HAP-1 (cell line): ENCODE measurements at regions of chr16 and their contacts with region 1.

Region 1: GRCh38 chr16:75794426-75794825 is 68.1 kb upstream of the CPHXL start:
- DNase-seq: no peak
- H3K4me3 ChIP-seq: no peak overlapping the region
- H3K4me1 ChIP-seq: no peaks in the 10 kb centered on the region
- H3K27me3 ChIP-seq: no peaks in the 10 kb centered on the region

Region 2: GRCh38 chr16:75296606-75297005 is 497.8 kb before region 1 on chr16:
- in situ Hi-C with region 1: no loop called
- DNase-seq: no peak
- H3K4me3 ChIP-seq: no peak overlapping the region
- H3K4me1 ChIP-seq: no peaks in the 10 kb centered on the region
- H3K27me3 ChIP-seq: no peaks in the 10 kb centered on the region

Region 3: DNA sequence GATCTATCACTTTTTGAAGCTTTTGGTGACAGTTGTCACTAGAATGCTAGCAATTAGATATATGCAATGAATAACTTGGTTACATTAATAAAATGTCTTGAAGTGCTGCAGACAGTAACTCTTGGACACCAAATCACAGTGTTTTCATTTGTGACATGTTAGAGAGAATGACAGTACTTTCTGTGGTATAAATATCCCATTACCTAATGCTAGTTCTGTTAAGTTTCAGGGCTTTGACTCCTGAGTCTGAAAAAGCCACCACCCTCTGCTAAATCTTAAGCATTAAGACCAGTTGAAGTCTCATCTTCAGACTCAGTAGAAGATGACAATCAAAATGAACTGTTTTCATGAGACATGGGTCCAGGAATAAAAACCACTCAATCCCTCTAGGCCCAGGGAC is 107.1 kb before region 1 on chr16:
- in situ Hi-C with region 1: no loop called
- DNase-seq: no peak
- H3K4me3 ChIP-seq: no peak overlapping the region
- H3K4me1 ChIP-seq: no peaks in the 10 kb centered on the region
- H3K27me3 ChIP-seq: no peaks in the 10 kb centered on the region

Region 4: DNA sequence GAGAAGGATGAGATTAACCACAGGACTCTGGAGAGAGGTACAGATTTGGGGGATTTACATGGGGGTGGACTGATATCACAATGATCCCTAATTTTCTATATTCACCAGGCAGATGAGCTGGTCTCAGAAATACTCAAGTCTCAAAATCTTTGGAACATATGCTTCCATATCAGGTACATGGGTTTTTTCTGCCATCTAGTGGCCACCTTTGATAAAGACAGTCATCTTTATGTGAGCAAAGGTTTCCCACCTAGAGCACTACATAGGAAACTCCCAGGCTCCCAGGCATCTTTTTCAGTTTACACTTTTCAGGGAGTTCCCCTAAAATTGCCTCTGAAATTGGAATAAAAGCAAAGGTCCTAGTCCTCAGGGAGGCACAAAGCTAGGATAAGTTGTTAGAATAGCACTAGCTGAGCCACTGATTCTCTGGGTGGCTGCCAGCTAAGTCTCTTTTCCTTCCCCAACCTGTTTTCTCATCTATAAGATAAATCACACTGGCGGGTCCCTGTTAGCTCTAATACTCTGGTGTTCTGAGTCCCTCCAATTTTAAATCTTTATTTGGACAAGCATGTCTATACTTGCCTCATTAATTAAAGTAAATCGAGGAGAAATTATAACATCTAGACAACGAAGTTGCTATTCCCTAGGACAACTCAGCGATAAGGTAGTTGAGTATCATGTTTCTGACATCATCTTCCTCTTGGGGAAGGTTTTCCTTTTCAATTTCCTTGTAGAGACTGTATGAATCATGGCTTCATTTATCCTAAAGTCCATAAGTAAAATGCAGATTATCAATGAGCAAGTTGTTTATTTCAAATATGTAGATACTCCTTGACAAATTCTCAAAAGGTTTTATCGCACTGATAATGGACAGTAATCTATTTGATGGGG is 1377.6 kb after region 1 on chr16:
- in situ Hi-C with region 1: loop called (anchors 10 kb)
- DNase-seq: peak; percentile 58 to 61
- H3K4me3 ChIP-seq: no peak overlapping the region
- H3K4me1 ChIP-seq: no peaks in the 10 kb centered on the region
- H3K27me3 ChIP-seq: peaks cover 11% of the 10 kb centered on the region; the same call in 1 of the 2 replicates